Aorta (tissue), 5 donors: ENCODE measurements at regions of chr12 and their contacts with region 1.

Region 1: GRCh38 chr12:11581179-11581755 is 68.2 kb upstream of the ETV6 start:
- DNase-seq: peak in 1 of 2 donors; percentile 66
- ATAC-seq: peak; percentile 74
- H3K4me3 ChIP-seq: no peak overlapping the region
- H3K27ac ChIP-seq: no peak overlapping the region
- H3K4me1 ChIP-seq: peaks cover 0 to 9% of the 10 kb centered on the region in 2 donors
- H3K27me3 ChIP-seq: no peaks in the 10 kb centered on the region

Region 2: DNA sequence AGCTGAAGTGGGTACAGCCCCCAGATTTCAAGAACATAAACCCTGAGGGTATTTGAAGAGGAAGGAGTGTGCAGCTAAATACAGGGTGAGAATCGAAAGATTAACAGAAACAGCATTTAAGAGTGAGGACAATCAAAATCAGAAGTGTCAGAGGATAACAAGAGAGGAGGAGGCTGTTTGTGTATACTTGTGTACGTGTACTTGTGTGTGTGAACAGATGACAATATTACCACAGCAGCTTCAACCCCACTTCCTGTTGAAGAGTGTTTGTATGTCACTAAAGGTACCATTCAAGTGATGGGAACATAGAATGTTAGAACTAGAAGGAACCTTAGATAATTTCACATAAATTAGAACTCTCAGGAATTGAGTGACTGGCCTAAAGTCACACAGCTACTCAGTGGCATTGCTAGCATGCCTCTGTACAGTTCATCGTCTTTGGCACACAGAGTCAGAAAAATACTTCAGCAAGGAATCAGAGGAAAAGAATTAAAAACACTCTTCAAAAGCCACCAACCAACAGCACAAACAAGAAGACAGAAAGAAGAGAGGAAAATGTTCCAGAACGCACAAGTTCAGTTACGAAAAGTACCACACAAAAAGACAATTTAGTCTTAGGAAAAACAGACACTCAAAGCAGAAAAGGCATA is 325.1 kb after region 1 on chr12:
- intact Hi-C with region 1: loop called in 1 of 2 experiments (anchors 10 kb)
- DNase-seq: no peak
- ATAC-seq: no peak
- H3K4me3 ChIP-seq: no peak overlapping the region
- H3K27ac ChIP-seq: peak overlapping the region in 1 of 2 donors; percentile 38
- H3K4me1 ChIP-seq: no peaks in the 10 kb centered on the region
- H3K27me3 ChIP-seq: no peaks in the 10 kb centered on the region

Region 3: GRCh38 chr12:12032851-12033588 is 451.8 kb after region 1 on chr12:
- intact Hi-C with region 1: loop called (anchors 1 to 2 kb)
- DNase-seq: peak; percentile 84 to 88
- ATAC-seq: peak; percentile 89
- H3K4me3 ChIP-seq: peak overlapping the region; percentile 27 to 94
- H3K27ac ChIP-seq: peak overlapping the region; percentile 20 to 53
- H3K4me1 ChIP-seq: no peaks in the 10 kb centered on the region
- H3K27me3 ChIP-seq: no peaks in the 10 kb centered on the region